ENCODE measurements at regions of chr9 and their contacts with region 1.

Region 1: DNA sequence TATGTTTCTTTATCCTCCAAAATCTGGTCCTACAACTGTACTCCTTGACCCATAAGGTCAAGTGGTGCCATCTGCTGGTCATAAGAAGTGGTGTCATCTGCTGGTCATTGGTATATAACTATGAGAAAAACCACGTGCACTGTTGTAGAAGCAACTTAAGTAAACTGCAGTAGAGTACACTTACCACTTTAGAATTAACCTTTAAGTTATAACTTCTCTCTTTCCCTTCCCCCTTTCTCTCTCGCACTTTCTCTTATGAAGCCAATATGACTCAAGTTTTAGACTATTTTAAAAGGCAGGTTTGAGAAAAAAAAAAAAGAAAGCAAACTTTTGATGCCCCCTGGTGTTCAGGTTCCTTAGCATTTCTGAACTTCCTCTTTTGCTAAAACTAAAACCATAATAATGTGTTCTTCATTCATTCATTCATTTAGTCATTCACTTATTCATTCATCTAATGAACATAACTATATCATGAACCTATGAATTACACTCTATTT is 12.8 kb upstream of the MTAP start:
- DNase-seq: peak; percentile 82 to 86 (median 85)
- H3K4me3 ChIP-seq: peak overlapping the region in 2 of 3 experiments; percentile 38 to 67
- H3K4me3 Mint-ChIP-seq: peak overlapping the region; percentile 68 to 88
- H3K27ac ChIP-seq: no peak overlapping the region
- H3K27ac Mint-ChIP-seq: peak overlapping the region in 4 of 7 donors; percentile 16 to 80 (median 50)
- H3K4me1 ChIP-seq: no peaks in the 10 kb centered on the region
- H3K4me1 Mint-ChIP-seq: peaks cover 14% of the 10 kb centered on the region
- H3K27me3 ChIP-seq: peaks cover 10 to 16% of the 10 kb centered on the region in 2 donors
- H3K27me3 Mint-ChIP-seq: peaks cover 0 to 8% (median 2%) of the 10 kb centered on the region in 3 donors
- CTCF ChIP-seq: peak; percentile 97

Region 2: GRCh38 chr9:21709464-21710058 is 80.0 kb before region 1 on chr9:
- intact Hi-C with region 1: loop called (anchors 2 to 10 kb)
- DNase-seq: peak; percentile 43 to 63 (median 56)
- H3K4me3 ChIP-seq: no peak overlapping the region
- H3K4me3 Mint-ChIP-seq: no peak overlapping the region
- H3K27ac ChIP-seq: no peak overlapping the region
- H3K27ac Mint-ChIP-seq: no peak overlapping the region
- H3K4me1 ChIP-seq: no peaks in the 10 kb centered on the region
- H3K4me1 Mint-ChIP-seq: no peaks in the 10 kb centered on the region
- H3K27me3 ChIP-seq: peaks cover 2 to 3% of the 10 kb centered on the region in 2 donors
- H3K27me3 Mint-ChIP-seq: peaks cover 6 to 7% (median 7%) of the 10 kb centered on the region in 3 donors
- CTCF ChIP-seq: peak; percentile 97